Aorta (tissue), 5 donors: ENCODE measurements at regions of chr15 and their contacts with region 1.

Region 1: DNA sequence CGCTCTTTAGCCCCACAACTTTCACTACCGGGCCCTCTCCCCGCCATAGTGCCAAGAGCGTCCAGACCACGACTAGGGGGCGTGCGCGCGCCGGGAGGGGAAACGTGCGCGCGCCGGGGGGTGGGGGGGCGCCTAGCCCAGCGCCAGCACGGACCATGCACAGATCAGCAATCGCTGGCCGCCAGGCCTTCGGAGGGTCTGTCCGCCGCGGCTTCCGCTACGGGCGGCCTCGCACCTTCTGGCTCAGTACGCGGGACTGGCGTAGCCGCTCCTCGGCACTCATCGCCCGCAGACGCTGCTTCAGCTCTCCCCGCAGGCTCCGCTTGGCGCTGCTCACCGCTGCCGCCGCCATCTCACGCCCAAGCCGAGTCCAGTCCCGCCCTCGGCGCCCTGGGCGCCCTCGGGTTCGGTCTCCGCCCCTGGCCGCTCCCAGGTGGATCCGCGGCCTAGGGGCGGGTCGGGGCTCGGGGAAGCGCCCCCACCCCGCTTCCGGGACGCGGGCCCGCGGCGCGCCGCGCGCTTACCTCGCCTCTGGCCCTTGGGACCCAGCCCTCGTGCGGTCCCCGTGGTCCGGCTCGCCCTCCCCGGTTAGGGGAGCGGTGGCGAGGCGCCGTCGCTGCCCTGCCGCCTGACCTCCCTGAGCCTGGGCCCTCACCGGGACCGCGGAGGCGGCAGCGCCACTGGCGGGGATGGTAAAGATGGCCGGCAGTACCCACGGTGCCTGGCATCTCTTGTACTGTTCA is at the start of gene MTHFS:
- DNase-seq: peak; percentile 84 to 90
- ATAC-seq: peak; percentile 96
- H3K4me3 ChIP-seq: peak within 1 kb of the TSS; percentile 50 to 94
- H3K27ac ChIP-seq: peak within 1 kb of the TSS; percentile 59 to 80
- H3K4me1 ChIP-seq: peaks cover 0 to 2% of the 10 kb centered on the region in 2 donors
- H3K27me3 ChIP-seq: no peaks in the 10 kb centered on the region
- total RNA-seq, gene MTHFS: 8.6 to 15.4 TPM

Region 2: GRCh38 chr15:79923515-79924395 is 26.9 kb after region 1 on chr15:
- intact Hi-C with region 1: loop called in 1 of 2 experiments (anchors 2 kb)
- DNase-seq: peak; percentile 95 to 97
- ATAC-seq: peak; percentile 99
- H3K4me3 ChIP-seq: peak overlapping the region; percentile 63 to 73
- H3K27ac ChIP-seq: peak overlapping the region; percentile 71 to 84
- H3K4me1 ChIP-seq: no peaks in the 10 kb centered on the region
- H3K27me3 ChIP-seq: no peaks in the 10 kb centered on the region

Region 3: GRCh38 chr15:79989682-79990081 is 92.9 kb after region 1 on chr15:
- intact Hi-C with region 1: loop called in 1 of 2 experiments (anchors 10 kb)
- DNase-seq: no peak
- ATAC-seq: no peak
- H3K4me3 ChIP-seq: no peak overlapping the region
- H3K27ac ChIP-seq: no peak overlapping the region
- H3K4me1 ChIP-seq: no peaks in the 10 kb centered on the region
- H3K27me3 ChIP-seq: no peaks in the 10 kb centered on the region

Region 4: GRCh38 chr15:80026754-80027153 is 129.9 kb after region 1 on chr15:
- intact Hi-C with region 1: no loop called
- DNase-seq: no peak
- ATAC-seq: no peak
- H3K4me3 ChIP-seq: no peak overlapping the region
- H3K27ac ChIP-seq: no peak overlapping the region
- H3K4me1 ChIP-seq: no peaks in the 10 kb centered on the region
- H3K27me3 ChIP-seq: no peaks in the 10 kb centered on the region

Region 5: GRCh38 chr15:80093854-80094418 is 197.1 kb after region 1 on chr15:
- intact Hi-C with region 1: no loop called
- DNase-seq: peak; percentile 52 to 79
- ATAC-seq: peak; percentile 70
- H3K4me3 ChIP-seq: no peak overlapping the region
- H3K27ac ChIP-seq: peak overlapping the region in 1 of 2 donors; percentile 57
- H3K4me1 ChIP-seq: peaks cover 0 to 14% of the 10 kb centered on the region in 2 donors
- H3K27me3 ChIP-seq: no peaks in the 10 kb centered on the region

Region 6: DNA sequence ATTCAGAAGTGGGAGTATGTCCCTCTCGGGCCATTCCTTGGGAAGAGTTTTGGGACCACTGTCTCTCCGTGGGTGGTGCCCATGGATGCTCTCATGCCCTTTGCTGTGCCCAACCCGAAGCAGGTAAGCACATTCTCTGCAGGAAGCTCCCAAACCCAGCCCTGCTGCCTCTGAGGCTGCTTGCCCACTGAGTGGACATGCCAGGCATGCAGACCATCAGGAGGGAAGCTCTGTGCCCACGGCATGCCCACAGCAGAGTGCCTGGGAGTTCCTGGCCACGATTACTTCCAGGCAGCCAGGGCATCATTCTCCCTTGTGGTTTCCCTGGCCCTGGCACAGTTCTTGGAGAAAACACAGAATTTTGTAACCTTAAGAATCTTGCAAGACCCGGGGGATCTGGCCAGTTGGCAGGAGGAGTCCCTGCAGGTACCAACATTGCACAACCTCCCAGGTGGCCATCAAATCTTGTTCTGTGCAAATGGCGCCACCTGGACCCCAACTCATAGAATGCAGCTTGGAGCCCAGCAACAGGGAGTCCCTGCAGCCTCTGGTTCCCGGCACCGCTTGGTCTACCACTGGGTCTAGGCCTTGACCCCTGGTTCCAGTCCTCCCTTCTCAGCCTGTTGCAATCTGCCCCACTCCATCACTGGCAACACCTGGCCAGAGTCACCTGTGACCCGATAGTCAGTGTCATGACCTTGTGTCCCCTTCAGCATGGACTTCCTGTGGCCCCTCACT is 276.4 kb after region 1 on chr15:
- intact Hi-C with region 1: loop called in 1 of 2 experiments (anchors 10 kb)
- DNase-seq: peak in 1 of 2 donors; percentile 73
- ATAC-seq: peak; percentile 75
- H3K4me3 ChIP-seq: no peak overlapping the region
- H3K27ac ChIP-seq: peak overlapping the region; percentile 8 to 98
- H3K4me1 ChIP-seq: peaks cover 2 to 7% of the 10 kb centered on the region in 2 donors
- H3K27me3 ChIP-seq: no peaks in the 10 kb centered on the region